B cell (primary cell): ENCODE measurements at regions of chr17 and their contacts with region 1.

Region 1: GRCh38 chr17:30093463-30094147 is 23.0 kb upstream of the NSRP1 start:
- DNase-seq: peak; percentile 75
- ATAC-seq: peak; percentile 57
- H3K4me3 ChIP-seq: no peak overlapping the region
- H3K4me3 Mint-ChIP-seq: no peak overlapping the region
- H3K27ac ChIP-seq: no peak overlapping the region
- H3K27ac Mint-ChIP-seq: no peak overlapping the region
- H3K4me1 ChIP-seq: peaks cover 6 to 7% of the 10 kb centered on the region in 2 donors
- H3K4me1 Mint-ChIP-seq: peaks cover 12% of the 10 kb centered on the region
- H3K27me3 ChIP-seq: peaks cover 0 to 9% (median 8%) of the 10 kb centered on the region in 4 experiments
- H3K27me3 Mint-ChIP-seq: peaks cover 12% of the 10 kb centered on the region
- CTCF ChIP-seq: peak; percentile 90

Region 2: GRCh38 chr17:30031214-30031869 is 62.3 kb before region 1 on chr17:
- CTCF ChIA-PET with region 1: interaction called, 27 read pairs
- POLR2A ChIA-PET with region 1: no interaction called
- intact Hi-C with region 1: loop called (anchors 1 kb)
- DNase-seq: no peak
- ATAC-seq: no peak
- H3K4me3 ChIP-seq: no peak overlapping the region
- H3K4me3 Mint-ChIP-seq: no peak overlapping the region
- H3K27ac ChIP-seq: no peak overlapping the region
- H3K27ac Mint-ChIP-seq: no peak overlapping the region
- H3K4me1 ChIP-seq: no peaks in the 10 kb centered on the region
- H3K4me1 Mint-ChIP-seq: no peaks in the 10 kb centered on the region
- H3K27me3 ChIP-seq: no peaks in the 10 kb centered on the region
- H3K27me3 Mint-ChIP-seq: no peaks in the 10 kb centered on the region
- CTCF ChIP-seq: no peak

Region 3: DNA sequence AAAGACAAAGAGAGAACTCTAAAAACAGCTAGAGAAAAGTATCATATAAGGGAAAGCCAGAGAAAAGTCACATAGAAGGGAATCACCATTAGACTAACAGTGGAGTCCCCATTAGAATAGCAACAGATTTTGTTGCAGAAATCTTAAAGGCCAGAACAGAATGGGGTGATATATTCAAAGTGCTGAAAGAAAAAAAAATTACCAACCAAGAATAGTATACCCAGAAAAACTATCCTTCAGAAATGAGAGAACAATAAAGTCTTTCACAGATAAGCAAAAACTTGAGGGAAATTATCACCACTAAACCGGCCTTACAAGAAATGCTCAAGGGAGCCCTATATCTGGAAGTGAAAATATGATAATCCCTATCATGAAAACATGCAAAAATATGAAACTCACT is 28.9 kb before region 1 on chr17:
- CTCF ChIA-PET with region 1: no interaction called
- POLR2A ChIA-PET with region 1: no interaction called
- intact Hi-C with region 1: no loop called
- DNase-seq: no peak
- ATAC-seq: no peak
- H3K4me3 ChIP-seq: no peak overlapping the region
- H3K4me3 Mint-ChIP-seq: no peak overlapping the region
- H3K27ac ChIP-seq: no peak overlapping the region
- H3K27ac Mint-ChIP-seq: no peak overlapping the region
- H3K4me1 ChIP-seq: no peaks in the 10 kb centered on the region
- H3K4me1 Mint-ChIP-seq: no peaks in the 10 kb centered on the region
- H3K27me3 ChIP-seq: peaks cover 0 to 9% (median 6%) of the 10 kb centered on the region in 4 experiments
- H3K27me3 Mint-ChIP-seq: peaks cover 30% of the 10 kb centered on the region
- CTCF ChIP-seq: no peak

Region 4: GRCh38 chr17:30158896-30159625 is 65.5 kb after region 1 on chr17:
- CTCF ChIA-PET with region 1: no interaction called
- POLR2A ChIA-PET with region 1: no interaction called
- intact Hi-C with region 1: no loop called
- DNase-seq: no peak
- ATAC-seq: no peak
- H3K4me3 ChIP-seq: no peak overlapping the region
- H3K4me3 Mint-ChIP-seq: peak overlapping the region; percentile 20
- H3K27ac ChIP-seq: no peak overlapping the region
- H3K27ac Mint-ChIP-seq: no peak overlapping the region
- H3K4me1 ChIP-seq: peaks cover 14 to 19% of the 10 kb centered on the region in 2 donors
- H3K4me1 Mint-ChIP-seq: peaks cover 37% of the 10 kb centered on the region
- H3K27me3 ChIP-seq: no peaks in the 10 kb centered on the region
- H3K27me3 Mint-ChIP-seq: no peaks in the 10 kb centered on the region
- CTCF ChIP-seq: no peak